Endothelial cell of umbilical vein (primary cell): ENCODE measurements at regions of chr14 and their contacts with region 1.

Region 1: DNA sequence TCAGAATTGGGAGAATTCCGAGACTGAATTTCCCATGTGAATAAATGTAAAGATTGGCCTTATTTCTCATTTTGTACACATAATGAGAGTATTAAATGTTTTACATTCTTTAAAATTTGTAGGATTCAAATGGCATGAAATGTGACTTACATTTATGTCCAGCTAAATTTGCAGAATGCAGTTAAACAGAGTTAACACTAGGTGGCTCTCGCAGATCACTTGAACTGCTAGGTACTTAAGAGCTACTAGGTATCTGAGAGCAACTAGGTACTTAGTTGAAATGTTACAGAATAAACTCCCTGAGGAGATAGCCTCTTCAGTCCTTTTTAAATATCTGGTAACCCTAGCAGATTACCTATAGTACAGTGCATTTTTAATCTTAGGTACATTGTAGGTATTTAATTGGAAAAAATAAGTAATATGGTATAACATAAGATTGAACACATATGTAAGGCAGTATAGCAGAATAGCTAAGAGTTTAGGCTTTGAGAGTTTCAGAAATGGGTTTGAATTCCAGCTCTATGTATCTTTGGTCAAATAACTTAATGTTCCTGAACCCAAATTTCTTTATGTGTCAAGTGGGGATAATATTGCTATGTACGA is 73.8 kb downstream of the KIAA0586 start:
- DNase-seq: peak; percentile 67
- H3K4me3 ChIP-seq: no peak overlapping the region
- H3K27ac ChIP-seq: no peak overlapping the region
- H3K4me1 ChIP-seq: no peaks in the 10 kb centered on the region
- H3K27me3 ChIP-seq: no peaks in the 10 kb centered on the region
- CTCF ChIP-seq: peak; percentile 64 to 67
- POLR2A ChIP-seq: no peak

Region 2: DNA sequence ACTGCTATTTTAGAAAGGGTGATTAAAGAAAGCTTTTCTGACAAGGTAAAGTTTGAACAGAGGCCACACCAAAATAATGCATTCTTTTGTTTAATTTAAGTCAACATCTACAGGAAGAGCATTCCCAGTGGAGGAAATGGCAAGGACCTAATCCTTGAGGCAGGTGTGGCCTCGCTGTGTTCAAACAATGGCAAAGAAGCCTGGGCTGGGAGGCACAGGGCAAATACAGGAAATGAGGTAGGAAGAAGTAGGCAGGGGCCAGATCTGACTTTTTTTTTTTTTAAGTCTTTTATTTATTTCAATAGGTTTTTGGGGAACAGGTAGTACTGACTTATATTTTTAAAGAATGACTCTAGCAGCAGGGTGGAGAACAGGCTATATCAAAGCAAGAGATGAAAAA is 402.8 kb before region 1 on chr14:
- CTCF ChIA-PET with region 1: no interaction called
- POLR2A ChIA-PET with region 1: no interaction called
- dilution Hi-C with region 1: no loop called
- intact Hi-C with region 1: no loop called
- DNase-seq: peak; percentile 22
- H3K4me3 ChIP-seq: no peak overlapping the region
- H3K27ac ChIP-seq: peak overlapping the region; percentile 31
- H3K4me1 ChIP-seq: peaks cover 22% of the 10 kb centered on the region
- H3K27me3 ChIP-seq: peaks cover 0 to 13% of the 10 kb centered on the region in 2 experiments
- CTCF ChIP-seq: no peak
- POLR2A ChIP-seq: no peak

Region 3: DNA sequence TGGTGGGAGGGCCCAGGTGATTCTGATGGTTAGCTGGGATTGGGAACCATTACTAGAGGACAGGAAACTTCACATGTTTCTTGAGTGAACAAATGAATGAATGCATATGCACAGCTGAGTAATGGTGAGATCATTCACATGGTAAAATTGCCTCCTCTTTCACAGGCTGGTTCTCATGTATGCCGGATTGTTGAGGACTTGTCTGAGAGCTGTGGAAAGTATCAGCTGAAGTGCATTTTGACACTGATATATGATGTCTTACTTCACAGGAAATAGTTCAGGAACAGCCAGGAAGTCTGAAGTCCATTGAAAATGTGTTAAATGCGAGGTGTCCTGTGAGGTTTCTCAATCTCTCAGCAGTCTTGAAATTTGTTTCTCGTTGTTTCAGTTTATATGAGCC is 58.9 kb after region 1 on chr14:
- CTCF ChIA-PET with region 1: interaction called, 21 read pairs
- POLR2A ChIA-PET with region 1: no interaction called
- dilution Hi-C with region 1: no loop called
- intact Hi-C with region 1: no loop called
- DNase-seq: peak; percentile 64
- H3K4me3 ChIP-seq: no peak overlapping the region
- H3K27ac ChIP-seq: no peak overlapping the region
- H3K4me1 ChIP-seq: peaks cover 4% of the 10 kb centered on the region
- H3K27me3 ChIP-seq: no peaks in the 10 kb centered on the region
- CTCF ChIP-seq: no peak
- POLR2A ChIP-seq: no peak

Region 4: DNA sequence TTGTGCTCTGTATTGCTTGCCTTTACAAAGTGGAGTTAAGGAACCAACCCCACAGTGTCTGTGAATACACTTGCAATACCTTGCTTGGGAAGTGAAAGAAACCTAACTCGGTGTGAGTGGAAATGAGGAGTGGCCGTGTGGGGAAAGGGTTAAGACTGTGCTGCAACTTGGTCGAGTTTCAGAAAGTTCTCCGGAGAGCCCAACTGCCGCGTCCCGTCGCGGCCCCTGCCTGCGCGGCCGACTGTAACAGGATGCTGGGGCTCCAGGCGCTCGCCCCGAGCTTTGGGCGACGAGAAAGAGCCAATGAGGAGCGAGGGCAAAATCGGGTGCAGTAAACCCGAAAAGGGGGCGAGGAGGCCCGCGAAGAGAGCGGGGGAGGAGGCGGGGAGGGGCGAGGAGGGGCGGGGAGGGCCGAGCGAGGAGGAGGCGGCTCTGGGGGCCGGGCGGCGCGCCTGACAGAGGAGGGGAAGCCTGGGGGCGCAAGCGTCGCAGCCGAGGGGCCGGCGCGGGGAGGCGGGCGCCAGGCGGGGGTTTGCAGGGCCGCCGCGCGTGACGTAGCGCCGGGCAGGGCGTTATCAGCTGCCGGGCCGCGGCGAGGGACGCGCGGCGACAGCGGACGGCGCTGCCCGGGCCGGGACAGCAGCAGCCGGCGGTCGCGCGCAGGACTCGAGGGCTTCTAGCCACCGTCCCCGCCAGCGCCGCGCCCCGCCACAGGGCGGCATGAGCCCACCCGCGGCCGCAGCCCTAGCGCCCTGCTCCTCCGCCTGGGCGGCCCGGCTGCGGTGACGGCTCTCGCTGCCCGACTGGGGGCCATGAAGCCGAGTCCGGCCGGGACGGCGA is 136.3 kb after region 1 on chr14 and contains the start of gene DACT1:
- CTCF ChIA-PET with region 1: interaction called, 93 read pairs
- POLR2A ChIA-PET with region 1: interaction called, 6 read pairs
- dilution Hi-C with region 1: no loop called
- intact Hi-C with region 1: loop called (anchors 1 kb)
- DNase-seq: peak; percentile 67
- H3K4me3 ChIP-seq: peak within 1 kb of the TSS; percentile 19 to 60 (median 41)
- H3K27ac ChIP-seq: no peak within 1 kb of the TSS
- H3K4me1 ChIP-seq: peaks cover 8% of the 10 kb centered on the region
- H3K27me3 ChIP-seq: peaks cover 30 to 51% of the 10 kb centered on the region in 2 experiments
- CTCF ChIP-seq: no peak
- POLR2A ChIP-seq: no peak
- total RNA-seq, gene DACT1: 0.27 and 0.37 TPM in 2 replicates

Region 5: DNA sequence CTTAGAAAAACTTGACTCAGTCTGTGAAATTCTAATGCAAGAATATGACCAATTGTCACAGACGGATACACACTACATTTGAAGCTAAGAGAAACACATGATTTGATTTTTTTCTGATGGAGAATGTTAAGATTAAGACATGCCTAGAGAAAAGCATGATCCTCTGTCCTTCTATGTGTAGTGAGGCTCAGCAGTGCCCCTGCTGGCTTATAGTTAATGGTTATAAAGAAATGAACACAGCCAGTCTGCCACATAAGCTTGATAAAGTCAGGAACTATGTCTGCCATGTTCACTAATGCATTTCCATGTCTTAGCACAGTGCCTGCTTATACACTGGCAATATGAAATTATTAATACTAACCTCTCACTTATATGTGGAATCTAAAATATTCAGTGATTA is 519.1 kb after region 1 on chr14:
- CTCF ChIA-PET with region 1: interaction called, 29 read pairs
- POLR2A ChIA-PET with region 1: no interaction called
- dilution Hi-C with region 1: no loop called
- intact Hi-C with region 1: no loop called
- DNase-seq: peak; percentile 35
- H3K4me3 ChIP-seq: no peak overlapping the region
- H3K27ac ChIP-seq: no peak overlapping the region
- H3K4me1 ChIP-seq: no peaks in the 10 kb centered on the region
- H3K27me3 ChIP-seq: peaks cover 9 to 20% of the 10 kb centered on the region in 2 experiments
- CTCF ChIP-seq: peak; percentile 17 to 43
- POLR2A ChIP-seq: no peak

Region 6: GRCh38 chr14:59120921-59121320 is 619.6 kb after region 1 on chr14:
- CTCF ChIA-PET with region 1: interaction called, 30 read pairs
- POLR2A ChIA-PET with region 1: no interaction called
- dilution Hi-C with region 1: no loop called
- intact Hi-C with region 1: loop called (anchors 1 kb)
- DNase-seq: no peak
- H3K4me3 ChIP-seq: no peak overlapping the region
- H3K27ac ChIP-seq: no peak overlapping the region
- H3K4me1 ChIP-seq: no peaks in the 10 kb centered on the region
- H3K27me3 ChIP-seq: peaks cover 9 to 12% of the 10 kb centered on the region in 2 experiments
- CTCF ChIP-seq: no peak
- POLR2A ChIP-seq: no peak